ENCODE measurements at regions of chr2 and their contacts with region 1.

Region 1: GRCh38 chr2:42095923-42096408 is 48.1 kb downstream of the PKDCC start:
- DNase-seq: peak; percentile 86
- H3K4me3 ChIP-seq: no peak overlapping the region
- H3K27ac ChIP-seq: no peak overlapping the region
- H3K4me1 ChIP-seq: peaks cover 0 to 12% (median 1%) of the 10 kb centered on the region in 4 donors
- H3K27me3 ChIP-seq: no peaks in the 10 kb centered on the region
- CTCF ChIP-seq: peak; percentile 79 to 87 (median 84)
- EP300 ChIP-seq: no peak
- POLR2A ChIP-seq: no peak

Region 2: GRCh38 chr2:42238644-42239288 is 142.8 kb after region 1 on chr2:
- intact Hi-C with region 1: loop called (anchors 2 kb)
- DNase-seq: no peak
- H3K4me3 ChIP-seq: no peak overlapping the region
- H3K27ac ChIP-seq: no peak overlapping the region
- H3K4me1 ChIP-seq: peaks cover 0 to 12% (median 4%) of the 10 kb centered on the region in 4 donors
- H3K27me3 ChIP-seq: no peaks in the 10 kb centered on the region
- CTCF ChIP-seq: peak; percentile 14 to 49 (median 33)
- EP300 ChIP-seq: no peak
- POLR2A ChIP-seq: no peak

Region 3: GRCh38 chr2:42329736-42330135 is 233.8 kb after region 1 on chr2:
- intact Hi-C with region 1: loop called (anchors 1 kb)
- DNase-seq: no peak
- H3K4me3 ChIP-seq: no peak overlapping the region
- H3K27ac ChIP-seq: no peak overlapping the region
- H3K4me1 ChIP-seq: no peaks in the 10 kb centered on the region
- H3K27me3 ChIP-seq: no peaks in the 10 kb centered on the region
- CTCF ChIP-seq: no peak
- EP300 ChIP-seq: no peak
- POLR2A ChIP-seq: no peak